ENCODE measurements at regions of chr5 and their contacts with region 1.

Region 1: DNA sequence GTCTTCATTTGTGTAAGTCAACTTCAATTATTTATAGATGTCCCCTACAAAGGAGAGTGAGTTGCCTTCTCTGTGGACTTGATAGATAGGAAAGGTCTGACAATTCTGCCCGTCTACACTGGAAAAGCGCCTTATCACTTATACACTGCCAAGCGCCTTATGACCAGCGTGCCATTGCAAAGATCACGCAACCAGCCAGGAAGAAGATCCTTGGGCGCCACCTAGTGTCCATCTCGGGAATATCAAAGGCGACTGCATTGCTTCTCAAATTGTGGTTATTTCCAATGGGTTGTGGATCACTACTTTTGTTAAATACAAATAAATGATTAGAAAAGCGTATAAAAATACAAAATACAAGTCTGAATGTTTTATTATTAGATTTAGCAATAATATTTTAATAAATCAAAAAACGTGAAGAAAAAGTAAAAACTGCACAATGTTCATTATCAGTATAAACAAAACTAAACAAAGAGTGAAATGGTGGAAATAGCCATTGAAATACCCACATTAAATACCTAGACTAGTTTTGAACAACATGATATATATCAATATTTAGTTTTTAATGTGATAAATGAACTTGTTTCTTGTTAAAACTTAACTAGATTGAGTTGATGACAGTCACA is 27.8 kb downstream of the SUB1 start:
- DNase-seq: peak; percentile 92
- ATAC-seq: peak; percentile 95
- H3K4me3 Mint-ChIP-seq: no peak overlapping the region
- H3K27ac Mint-ChIP-seq: peak overlapping the region; percentile 18
- H3K4me1 Mint-ChIP-seq: peaks cover 2% of the 10 kb centered on the region
- H3K27me3 Mint-ChIP-seq: no peaks in the 10 kb centered on the region
- CTCF ChIP-seq: peak; percentile 96

Region 2: GRCh38 chr5:32174011-32174870 is 438.9 kb before region 1 on chr5 and contains the start of gene GOLPH3:
- CTCF ChIA-PET with region 1: no interaction called
- POLR2A ChIA-PET with region 1: no interaction called
- intact Hi-C with region 1: no loop called
- DNase-seq: peak; percentile 97
- ATAC-seq: peak; percentile 88
- H3K4me3 Mint-ChIP-seq: peak within 1 kb of the TSS; percentile 94
- H3K27ac Mint-ChIP-seq: peak within 1 kb of the TSS; percentile 96
- H3K4me1 Mint-ChIP-seq: peaks cover 24% of the 10 kb centered on the region
- H3K27me3 Mint-ChIP-seq: peaks cover 3% of the 10 kb centered on the region
- CTCF ChIP-seq: no peak
- total RNA-seq, gene GOLPH3: 53.2 to 56.7 TPM

Region 3: DNA sequence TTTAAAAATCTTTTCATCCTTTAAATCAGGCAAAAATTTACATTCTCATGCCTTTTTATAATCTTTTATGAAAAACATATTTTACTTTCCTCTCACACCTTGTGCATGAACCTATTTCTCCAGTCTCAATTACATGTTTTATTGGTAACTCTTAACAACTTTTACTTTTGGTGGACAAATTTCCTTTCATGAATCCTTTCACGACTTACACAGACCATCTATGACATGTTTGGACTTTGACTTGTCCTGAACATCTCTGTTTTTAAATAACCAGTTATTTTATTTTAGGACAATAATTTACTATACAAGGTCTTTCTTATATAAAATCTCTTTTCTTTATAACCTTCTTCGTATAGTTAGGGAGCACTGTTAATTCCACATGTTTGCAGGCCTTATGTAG is 274.0 kb before region 1 on chr5:
- CTCF ChIA-PET with region 1: no interaction called
- POLR2A ChIA-PET with region 1: no interaction called
- intact Hi-C with region 1: no loop called
- DNase-seq: no peak
- ATAC-seq: no peak
- H3K4me3 Mint-ChIP-seq: no peak overlapping the region
- H3K27ac Mint-ChIP-seq: no peak overlapping the region
- H3K4me1 Mint-ChIP-seq: no peaks in the 10 kb centered on the region
- H3K27me3 Mint-ChIP-seq: no peaks in the 10 kb centered on the region
- CTCF ChIP-seq: no peak

Region 4: DNA sequence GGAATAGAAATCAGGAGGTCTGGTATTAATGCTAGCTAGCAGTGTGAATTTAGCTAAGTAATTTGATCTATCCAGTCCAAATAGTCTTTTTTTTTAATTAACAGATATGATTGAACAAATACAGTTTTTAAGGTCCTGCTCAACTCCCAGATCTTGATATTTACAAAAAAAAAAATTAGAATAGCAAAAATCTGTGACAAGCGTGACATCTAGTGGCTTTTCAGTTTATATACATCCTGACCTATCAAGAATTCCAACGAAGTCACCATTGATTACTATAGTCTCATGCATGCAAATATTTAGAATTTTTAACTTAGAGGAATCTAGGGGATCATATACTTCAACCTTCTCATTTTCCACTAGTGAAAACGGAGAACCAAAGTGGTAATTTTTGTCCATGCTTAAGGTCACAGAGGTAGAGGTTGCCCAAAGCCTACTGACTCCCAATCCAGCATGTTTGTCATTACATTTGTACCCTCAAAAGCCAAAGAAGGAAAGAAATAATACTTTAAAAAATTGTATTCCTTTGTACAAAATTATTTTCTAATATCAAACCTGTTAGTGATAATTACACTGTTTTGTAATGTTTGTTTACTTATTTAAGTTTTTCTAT is 810.0 kb after region 1 on chr5:
- CTCF ChIA-PET with region 1: no interaction called
- POLR2A ChIA-PET with region 1: no interaction called
- intact Hi-C with region 1: loop called (anchors 10 kb)
- DNase-seq: no peak
- ATAC-seq: peak; percentile 34
- H3K4me3 Mint-ChIP-seq: no peak overlapping the region
- H3K27ac Mint-ChIP-seq: no peak overlapping the region
- H3K4me1 Mint-ChIP-seq: no peaks in the 10 kb centered on the region
- H3K27me3 Mint-ChIP-seq: peaks cover 11% of the 10 kb centered on the region
- CTCF ChIP-seq: peak; percentile 53

Measured in activated CD8-positive, alpha-beta T cell treated with anti-CD3 and anti-CD28 coated beads for 36 hours (primary cell).